ENCODE measurements at regions of chr19 and their contacts with region 1.

Region 1: GRCh38 chr19:2950286-2951124 is 5.7 kb upstream of the ZNF77 start:
- DNase-seq: peak; percentile 100
- ATAC-seq: peak; percentile 99
- H3K4me3 Mint-ChIP-seq: peak overlapping the region; percentile 95
- H3K27ac Mint-ChIP-seq: peak overlapping the region; percentile 95
- H3K4me1 Mint-ChIP-seq: peaks cover 14% of the 10 kb centered on the region
- H3K27me3 Mint-ChIP-seq: no peaks in the 10 kb centered on the region

Region 2: DNA sequence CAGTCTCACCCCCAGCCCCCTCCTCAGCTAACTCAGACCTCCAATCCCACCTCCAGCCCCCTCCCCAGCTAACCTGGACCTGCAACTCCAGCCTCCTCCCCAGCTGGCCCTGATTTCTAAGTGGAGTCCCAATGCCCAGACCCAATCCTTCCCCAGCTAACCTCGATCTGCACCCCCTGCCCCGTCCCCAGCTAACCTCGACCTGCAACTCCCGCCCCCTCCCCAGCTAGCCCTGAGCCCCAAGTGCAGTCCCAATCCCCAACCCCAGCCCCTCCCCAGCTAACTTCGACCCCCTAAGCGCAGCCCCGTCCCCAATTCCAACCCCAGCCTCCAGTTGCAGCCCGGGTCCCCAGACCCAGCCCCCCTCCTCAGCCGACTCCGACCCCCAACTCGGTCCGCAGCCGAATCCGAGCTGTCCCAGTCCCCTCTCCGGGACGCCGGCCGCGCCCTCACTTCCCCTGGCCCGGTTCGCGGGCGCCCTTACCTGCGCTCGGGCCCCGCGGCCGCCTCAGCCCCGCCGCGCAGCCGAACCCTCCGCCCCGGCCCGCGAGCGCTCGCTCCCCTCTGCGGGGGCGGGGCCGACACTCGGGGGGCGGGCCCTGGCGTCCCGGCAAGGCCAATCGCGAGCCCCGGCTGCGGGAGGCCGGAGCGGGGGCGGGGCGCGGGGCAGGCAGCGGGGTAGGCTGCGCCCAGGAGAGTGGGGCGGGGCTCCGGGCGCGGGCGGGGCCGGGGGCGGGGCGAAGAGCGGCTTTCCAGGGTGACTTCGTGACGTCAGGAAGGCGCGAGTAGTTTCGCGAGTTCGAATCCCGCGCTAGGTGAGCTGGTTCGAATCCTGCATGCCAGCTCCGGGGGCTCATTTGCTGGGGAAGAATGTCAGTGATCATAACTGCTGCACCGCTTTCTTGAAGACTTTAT is 248.1 kb before region 1 on chr19 and contains the start of gene GNG7:
- CTCF ChIA-PET with region 1: interaction called, 3 read pairs
- POLR2A ChIA-PET with region 1: no interaction called
- intact Hi-C with region 1: loop called in 1 of 2 experiments (anchors 1 kb)
- DNase-seq: peak; percentile 99
- ATAC-seq: peak; percentile 100
- H3K4me3 Mint-ChIP-seq: peak within 1 kb of the TSS; percentile 60
- H3K27ac Mint-ChIP-seq: peak within 1 kb of the TSS; percentile 74
- H3K4me1 Mint-ChIP-seq: peaks cover 24% of the 10 kb centered on the region
- H3K27me3 Mint-ChIP-seq: no peaks in the 10 kb centered on the region
- total RNA-seq, gene GNG7: 1.1 to 1.2 TPM

Region 3: DNA sequence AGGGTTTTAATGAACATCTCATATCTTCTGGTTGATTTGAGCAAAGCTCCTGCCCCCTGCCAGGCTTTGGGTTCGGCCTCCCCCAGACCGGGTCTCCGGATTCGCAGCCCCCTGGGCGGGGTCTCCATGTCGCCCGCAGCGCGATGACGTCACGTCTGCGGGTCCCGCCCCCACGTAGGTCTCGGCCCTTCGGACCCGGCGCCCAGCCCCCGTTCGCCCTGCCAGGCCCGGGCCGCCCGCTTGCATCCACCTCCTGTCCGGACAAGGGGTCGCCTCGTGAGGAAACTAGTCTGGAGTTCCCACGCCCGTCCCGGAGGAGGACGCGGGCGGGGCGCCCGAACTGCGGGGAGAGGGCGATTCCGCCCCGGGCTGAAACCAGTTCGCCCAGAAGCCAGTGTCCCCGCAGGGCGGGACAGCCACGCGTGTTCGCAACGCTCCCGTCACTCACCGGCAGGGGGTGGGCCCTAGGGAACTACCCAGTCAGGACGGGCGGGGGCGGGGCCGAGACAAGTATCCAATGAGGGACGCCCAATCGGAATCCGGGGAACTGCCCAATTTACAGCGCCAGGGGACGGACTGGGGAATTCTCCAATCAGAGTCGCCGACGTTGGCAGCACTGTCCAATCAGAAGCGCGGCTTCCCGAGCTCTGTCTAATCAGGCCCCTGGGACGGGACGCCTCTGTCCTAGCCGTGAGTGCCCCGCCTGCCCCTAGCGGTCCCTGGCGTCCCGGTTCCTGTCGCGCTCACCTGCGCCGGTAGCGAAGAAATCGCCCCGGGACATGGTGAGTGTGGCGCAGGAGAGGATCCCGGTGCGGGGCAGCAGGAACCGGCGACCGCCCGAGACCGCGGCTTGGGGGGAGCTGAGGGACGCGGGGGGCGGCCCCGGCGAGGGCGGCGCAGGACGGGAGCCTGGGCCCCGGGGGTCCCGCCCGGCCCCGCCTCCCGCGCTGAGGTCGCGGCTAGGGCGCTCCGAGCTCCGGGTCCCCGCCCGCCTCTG is 109.4 kb before region 1 on chr19 and contains the start of gene ZNF555:
- CTCF ChIA-PET with region 1: interaction called, 6 read pairs
- POLR2A ChIA-PET with region 1: interaction called, 7 read pairs
- intact Hi-C with region 1: loop called in 1 of 2 experiments (anchors 1 kb)
- DNase-seq: peak; percentile 99
- ATAC-seq: peak; percentile 100
- H3K4me3 Mint-ChIP-seq: peak within 1 kb of the TSS; percentile 77
- H3K27ac Mint-ChIP-seq: peak within 1 kb of the TSS; percentile 55
- H3K4me1 Mint-ChIP-seq: peaks cover 11% of the 10 kb centered on the region
- H3K27me3 Mint-ChIP-seq: no peaks in the 10 kb centered on the region
- total RNA-seq, gene ZNF555: 1.9 TPM

Region 4: GRCh38 chr19:2923510-2923909 is 27.0 kb before region 1 on chr19:
- CTCF ChIA-PET with region 1: interaction called, 11 read pairs
- POLR2A ChIA-PET with region 1: no interaction called
- intact Hi-C with region 1: no loop called
- DNase-seq: no peak
- ATAC-seq: no peak
- H3K4me3 Mint-ChIP-seq: no peak overlapping the region
- H3K27ac Mint-ChIP-seq: no peak overlapping the region
- H3K4me1 Mint-ChIP-seq: no peaks in the 10 kb centered on the region
- H3K27me3 Mint-ChIP-seq: no peaks in the 10 kb centered on the region

Region 5: DNA sequence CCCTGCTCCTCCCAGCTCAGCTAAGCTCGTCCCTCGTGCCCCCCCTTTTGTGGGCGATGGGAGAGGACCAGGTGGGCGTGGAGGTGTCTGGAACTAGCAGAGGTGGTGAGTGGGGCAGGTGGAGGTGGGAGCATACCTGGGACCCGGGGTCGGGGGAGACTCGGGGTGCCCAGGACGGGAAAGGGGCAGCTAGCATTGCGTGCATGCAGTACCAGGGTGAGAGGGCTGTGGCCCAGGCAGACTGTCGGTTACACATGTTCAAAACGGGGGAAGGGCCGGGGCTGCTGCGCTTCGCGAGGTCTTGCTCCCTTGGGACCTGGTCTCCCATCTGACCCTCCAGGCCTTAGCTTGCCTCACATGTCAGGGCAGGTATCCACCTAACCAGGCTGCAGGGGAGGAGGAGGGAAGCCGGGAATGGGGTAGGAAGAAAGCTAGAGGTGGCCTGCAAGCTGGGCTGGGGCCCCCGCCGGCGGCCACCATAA is 102.8 kb after region 1 on chr19:
- CTCF ChIA-PET with region 1: interaction called, 15 read pairs
- POLR2A ChIA-PET with region 1: no interaction called
- intact Hi-C with region 1: no loop called
- DNase-seq: no peak
- ATAC-seq: no peak
- H3K4me3 Mint-ChIP-seq: no peak overlapping the region
- H3K27ac Mint-ChIP-seq: no peak overlapping the region
- H3K4me1 Mint-ChIP-seq: peaks cover 29% of the 10 kb centered on the region
- H3K27me3 Mint-ChIP-seq: no peaks in the 10 kb centered on the region

Region 6: GRCh38 chr19:3087769-3088168 is 137.3 kb after region 1 on chr19:
- CTCF ChIA-PET with region 1: no interaction called
- POLR2A ChIA-PET with region 1: no interaction called
- intact Hi-C with region 1: no loop called
- DNase-seq: no peak
- ATAC-seq: no peak
- H3K4me3 Mint-ChIP-seq: no peak overlapping the region
- H3K27ac Mint-ChIP-seq: no peak overlapping the region
- H3K4me1 Mint-ChIP-seq: no peaks in the 10 kb centered on the region
- H3K27me3 Mint-ChIP-seq: no peaks in the 10 kb centered on the region

Region 7: GRCh38 chr19:3210347-3211017 is 260.0 kb after region 1 on chr19:
- CTCF ChIA-PET with region 1: no interaction called
- POLR2A ChIA-PET with region 1: interaction called, 4 read pairs
- intact Hi-C with region 1: loop called in 1 of 2 experiments (anchors 1 kb)
- DNase-seq: peak; percentile 86
- ATAC-seq: peak; percentile 98
- H3K4me3 Mint-ChIP-seq: no peak overlapping the region
- H3K27ac Mint-ChIP-seq: no peak overlapping the region
- H3K4me1 Mint-ChIP-seq: no peaks in the 10 kb centered on the region
- H3K27me3 Mint-ChIP-seq: no peaks in the 10 kb centered on the region

Region 8: DNA sequence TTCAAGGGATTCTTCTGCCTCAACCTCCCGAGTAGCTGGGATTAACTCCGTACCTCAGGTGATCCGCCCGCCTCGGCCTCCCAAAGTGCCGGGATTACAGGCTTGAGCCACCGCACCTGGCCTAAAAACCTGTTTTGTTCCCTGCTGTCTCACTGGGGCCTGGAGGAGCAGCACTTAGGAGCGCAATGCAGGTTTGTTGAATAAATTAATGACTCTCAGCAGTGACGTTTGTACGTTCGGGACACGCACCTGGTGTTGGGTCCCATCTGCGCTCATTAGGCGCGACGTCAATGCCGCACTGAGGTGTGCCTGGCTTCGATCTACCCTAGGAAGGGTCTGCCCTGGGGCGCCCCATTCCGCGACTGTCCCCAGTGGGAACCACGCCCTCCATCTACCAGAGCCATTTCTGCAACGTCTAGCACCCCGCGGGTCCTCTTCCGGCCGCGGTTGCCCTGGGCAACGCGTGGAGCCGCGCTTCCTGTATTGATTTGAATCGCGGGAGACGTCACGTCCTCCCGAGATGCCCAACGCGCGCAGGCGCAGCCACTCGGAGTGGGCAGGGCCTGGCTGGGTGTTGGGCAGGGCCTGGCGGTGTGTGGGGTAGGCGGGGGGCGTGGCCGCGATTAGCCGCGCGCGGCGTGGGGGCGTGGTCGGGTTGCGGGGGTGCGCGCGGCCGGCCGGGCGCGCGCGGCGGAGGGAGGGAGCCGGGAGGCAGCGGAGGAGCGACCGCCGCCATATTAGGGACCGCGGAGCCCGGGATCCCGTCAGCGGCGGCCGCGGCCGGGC is 555.3 kb after region 1 on chr19 and contains the start of gene FZR1:
- CTCF ChIA-PET with region 1: no interaction called
- POLR2A ChIA-PET with region 1: no interaction called
- intact Hi-C with region 1: loop called in 1 of 2 experiments (anchors 5 kb)
- DNase-seq: peak; percentile 100
- ATAC-seq: peak; percentile 92
- H3K4me3 Mint-ChIP-seq: peak within 1 kb of the TSS; percentile 84
- H3K27ac Mint-ChIP-seq: peak within 1 kb of the TSS; percentile 86
- H3K4me1 Mint-ChIP-seq: peaks cover 45% of the 10 kb centered on the region
- H3K27me3 Mint-ChIP-seq: no peaks in the 10 kb centered on the region
- total RNA-seq, gene FZR1: 40.8 to 50.7 TPM